ENCODE measurements at regions of chr18 and their contacts with region 1.

Region 1: DNA sequence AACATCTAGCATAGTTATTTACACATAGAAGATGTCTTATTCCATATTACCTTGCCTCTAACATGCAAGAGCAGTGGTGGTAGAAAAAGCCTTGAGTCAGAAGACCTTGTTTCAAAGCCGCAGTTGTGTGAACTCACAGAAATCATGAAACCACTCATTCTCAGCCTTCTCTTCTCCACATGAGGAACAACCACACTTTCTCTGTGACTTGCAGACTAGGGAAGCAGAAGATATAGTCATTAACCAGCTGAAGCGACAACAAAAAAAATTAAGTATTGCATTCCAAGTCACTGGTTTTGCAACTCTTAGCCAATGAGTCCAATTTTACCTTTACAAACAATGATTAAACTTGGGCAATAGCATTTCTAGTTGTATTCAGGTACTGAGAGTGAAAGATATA is 19.0 kb downstream of the TWSG1 start:
- DNase-seq: no peak

Region 2: GRCh38 chr18:9449600-9450414 is 96.2 kb after region 1 on chr18:
- intact Hi-C with region 1: no loop called
- DNase-seq: no peak

Region 3: GRCh38 chr18:9506046-9506792 is 152.6 kb after region 1 on chr18:
- intact Hi-C with region 1: loop called (anchors 10 kb)
- DNase-seq: no peak

Region 4: GRCh38 chr18:9587924-9588323 is 234.3 kb after region 1 on chr18:
- intact Hi-C with region 1: no loop called
- DNase-seq: no peak